Activated CD4-positive, alpha-beta memory T cell treated with anti-CD3 and anti-CD28 coated beads, Interleukin-2, amount 10 ng/mL, durations not matched to agents 7 days and 5 days (primary cell): ENCODE measurements at regions of chr6 and their contacts with region 1.

Region 1: DNA sequence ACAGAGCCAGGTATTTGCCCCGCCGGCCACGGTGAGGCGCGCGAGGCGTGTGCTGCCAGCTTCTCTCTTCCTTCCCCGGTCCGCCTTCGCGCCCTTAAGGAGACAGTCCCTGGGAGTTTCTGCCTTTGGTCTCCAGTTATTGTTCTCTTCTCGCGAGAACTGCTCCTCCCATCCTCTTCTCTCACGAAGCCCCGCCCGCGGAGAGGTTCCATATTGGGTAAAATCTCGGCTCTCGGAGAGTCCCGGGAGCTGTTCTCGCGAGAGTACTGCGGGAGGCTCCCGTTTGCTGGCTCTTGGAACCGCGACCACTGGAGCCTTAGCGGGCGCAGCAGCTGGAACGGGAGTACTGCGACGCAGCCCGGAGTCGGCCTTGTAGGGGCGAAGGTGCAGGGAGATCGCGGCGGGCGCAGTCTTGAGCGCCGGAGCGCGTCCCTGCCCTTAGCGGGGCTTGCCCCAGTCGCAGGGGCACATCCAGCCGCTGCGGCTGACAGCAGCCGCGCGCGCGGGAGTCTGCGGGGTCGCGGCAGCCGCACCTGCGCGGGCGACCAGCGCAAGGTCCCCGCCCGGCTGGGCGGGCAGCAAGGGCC is at the start of gene MAPK14:
- DNase-seq: peak; percentile 99
- H3K4me3 Mint-ChIP-seq: peak within 1 kb of the TSS; percentile 83
- H3K27ac Mint-ChIP-seq: peak within 1 kb of the TSS; percentile 89
- H3K4me1 Mint-ChIP-seq: peaks cover 37% of the 10 kb centered on the region
- H3K27me3 Mint-ChIP-seq: peaks cover 24% of the 10 kb centered on the region
- total RNA-seq, gene MAPK14: 71.4 to 72.2 TPM

Region 2: GRCh38 chr6:35857853-35858252 is 169.7 kb before region 1 on chr6:
- CTCF ChIA-PET with region 1: no interaction called
- POLR2A ChIA-PET with region 1: no interaction called
- DNase-seq: no peak
- H3K4me3 Mint-ChIP-seq: no peak overlapping the region
- H3K27ac Mint-ChIP-seq: no peak overlapping the region
- H3K4me1 Mint-ChIP-seq: peaks cover 2% of the 10 kb centered on the region
- H3K27me3 Mint-ChIP-seq: no peaks in the 10 kb centered on the region

Region 3: GRCh38 chr6:35993150-35993549 is 34.4 kb before region 1 on chr6:
- CTCF ChIA-PET with region 1: no interaction called
- POLR2A ChIA-PET with region 1: no interaction called
- DNase-seq: no peak
- H3K4me3 Mint-ChIP-seq: no peak overlapping the region
- H3K27ac Mint-ChIP-seq: no peak overlapping the region
- H3K4me1 Mint-ChIP-seq: no peaks in the 10 kb centered on the region
- H3K27me3 Mint-ChIP-seq: peaks cover 5% of the 10 kb centered on the region

Region 4: DNA sequence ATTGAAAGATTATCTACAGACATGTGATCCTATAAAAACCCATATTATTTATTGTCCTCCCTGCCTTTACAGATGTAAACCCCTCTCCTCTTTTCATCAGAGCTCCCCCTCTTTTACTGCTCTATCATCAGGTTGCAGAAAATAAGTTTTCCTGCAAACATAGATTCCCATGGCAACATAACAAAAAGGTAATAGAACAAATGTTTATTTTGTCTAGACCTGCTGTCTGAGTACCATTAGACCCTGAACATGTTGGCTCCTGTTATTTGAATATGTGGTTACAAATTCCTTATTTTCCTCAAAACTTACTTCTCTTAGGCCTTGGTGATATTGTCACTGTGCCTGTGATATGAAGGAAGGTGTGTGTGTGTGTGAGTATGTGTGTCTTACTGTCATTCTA is 11.5 kb after region 1 on chr6:
- CTCF ChIA-PET with region 1: interaction called, 12 read pairs
- POLR2A ChIA-PET with region 1: interaction called, 23 read pairs
- DNase-seq: no peak
- H3K4me3 Mint-ChIP-seq: no peak overlapping the region
- H3K27ac Mint-ChIP-seq: no peak overlapping the region
- H3K4me1 Mint-ChIP-seq: peaks cover 52% of the 10 kb centered on the region
- H3K27me3 Mint-ChIP-seq: no peaks in the 10 kb centered on the region

Region 5: DNA sequence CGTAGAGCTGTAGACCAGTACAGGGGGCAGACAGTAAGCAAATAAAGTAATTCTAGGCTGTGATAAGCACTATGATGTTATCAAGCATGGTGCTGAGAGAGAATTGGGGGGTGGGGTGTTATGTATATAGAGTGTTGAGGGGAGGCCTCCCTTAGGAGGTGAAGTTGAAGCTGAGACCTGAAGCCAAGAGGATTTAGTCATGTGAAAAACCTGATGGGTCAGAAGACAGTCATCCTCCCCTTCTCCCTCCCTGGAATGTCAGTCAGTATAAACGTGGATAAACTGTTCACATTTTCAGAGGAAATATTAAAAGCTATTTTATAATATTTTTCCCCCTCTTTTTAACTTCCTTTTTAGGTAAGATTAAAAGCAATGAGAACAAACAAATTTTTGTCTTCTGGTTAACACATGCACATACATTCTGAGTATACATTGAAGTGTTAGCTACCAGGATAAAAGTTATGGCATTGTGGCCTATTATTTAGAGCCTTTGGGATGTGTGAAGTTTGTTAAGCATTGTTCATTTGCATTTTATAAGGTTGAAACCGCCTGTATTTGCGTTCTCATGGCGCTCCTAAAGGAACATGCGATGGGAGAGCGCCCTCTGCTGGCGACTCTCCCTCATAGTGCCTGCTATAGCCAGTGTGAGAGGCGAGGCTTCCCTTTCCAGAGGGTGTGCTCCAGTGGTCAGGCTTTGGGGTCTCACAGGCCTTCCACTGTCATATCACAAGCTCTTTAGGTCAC is 67.3 kb after region 1 on chr6:
- CTCF ChIA-PET with region 1: interaction called, 142 read pairs
- POLR2A ChIA-PET with region 1: interaction called, 48 read pairs
- DNase-seq: peak; percentile 82
- H3K4me3 Mint-ChIP-seq: no peak overlapping the region
- H3K27ac Mint-ChIP-seq: no peak overlapping the region
- H3K4me1 Mint-ChIP-seq: peaks cover 25% of the 10 kb centered on the region
- H3K27me3 Mint-ChIP-seq: no peaks in the 10 kb centered on the region

Region 6: GRCh38 chr6:36123257-36124139 is 95.9 kb after region 1 on chr6:
- CTCF ChIA-PET with region 1: interaction called, 22 read pairs
- POLR2A ChIA-PET with region 1: interaction called, 95 read pairs
- DNase-seq: peak; percentile 96
- H3K4me3 Mint-ChIP-seq: peak overlapping the region; percentile 22
- H3K27ac Mint-ChIP-seq: peak overlapping the region; percentile 71
- H3K4me1 Mint-ChIP-seq: peaks cover 79% of the 10 kb centered on the region
- H3K27me3 Mint-ChIP-seq: no peaks in the 10 kb centered on the region

Region 7: DNA sequence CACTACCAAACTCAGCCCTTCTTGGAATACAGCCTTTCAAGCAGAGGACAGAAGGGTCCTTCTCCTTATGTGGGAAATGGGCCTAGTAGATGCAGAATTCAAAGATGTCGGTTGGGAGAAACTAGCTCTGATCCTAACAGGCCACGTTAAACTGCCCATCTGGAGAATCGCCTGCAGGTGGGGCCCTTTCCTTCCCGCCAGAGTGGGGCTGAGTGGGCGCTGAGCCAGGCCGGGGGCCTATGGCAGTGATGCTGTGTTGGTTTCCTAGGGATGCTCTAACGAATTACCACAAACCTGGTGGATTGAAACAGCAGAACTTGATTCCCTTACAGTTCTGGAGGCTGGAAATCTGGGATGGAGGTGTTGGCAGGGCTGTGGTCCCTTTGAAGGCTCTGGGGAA is 111.8 kb after region 1 on chr6:
- CTCF ChIA-PET with region 1: no interaction called
- POLR2A ChIA-PET with region 1: interaction called, 12 read pairs
- DNase-seq: no peak
- H3K4me3 Mint-ChIP-seq: no peak overlapping the region
- H3K27ac Mint-ChIP-seq: peak overlapping the region; percentile 49
- H3K4me1 Mint-ChIP-seq: peaks cover 32% of the 10 kb centered on the region
- H3K27me3 Mint-ChIP-seq: no peaks in the 10 kb centered on the region

Region 8: GRCh38 chr6:36302227-36302976 is 274.8 kb after region 1 on chr6:
- CTCF ChIA-PET with region 1: interaction called, 12 read pairs
- POLR2A ChIA-PET with region 1: no interaction called
- DNase-seq: peak; percentile 92
- H3K4me3 Mint-ChIP-seq: no peak overlapping the region
- H3K27ac Mint-ChIP-seq: no peak overlapping the region
- H3K4me1 Mint-ChIP-seq: no peaks in the 10 kb centered on the region
- H3K27me3 Mint-ChIP-seq: peaks cover 16% of the 10 kb centered on the region

Region 9: GRCh38 chr6:36423101-36423824 is 395.7 kb after region 1 on chr6:
- CTCF ChIA-PET with region 1: interaction called, 5 read pairs
- POLR2A ChIA-PET with region 1: interaction called, 10 read pairs
- DNase-seq: peak; percentile 98
- H3K4me3 Mint-ChIP-seq: peak overlapping the region; percentile 81
- H3K27ac Mint-ChIP-seq: peak overlapping the region; percentile 77
- H3K4me1 Mint-ChIP-seq: peaks cover 23% of the 10 kb centered on the region
- H3K27me3 Mint-ChIP-seq: peaks cover 1% of the 10 kb centered on the region